ENCODE measurements at regions of chr1 and their contacts with region 1.

Region 1: GRCh38 chr1:215526553-215527151 is 40.5 kb upstream of the KCTD3 start:
- DNase-seq: no peak
- ATAC-seq: no peak

Region 2: DNA sequence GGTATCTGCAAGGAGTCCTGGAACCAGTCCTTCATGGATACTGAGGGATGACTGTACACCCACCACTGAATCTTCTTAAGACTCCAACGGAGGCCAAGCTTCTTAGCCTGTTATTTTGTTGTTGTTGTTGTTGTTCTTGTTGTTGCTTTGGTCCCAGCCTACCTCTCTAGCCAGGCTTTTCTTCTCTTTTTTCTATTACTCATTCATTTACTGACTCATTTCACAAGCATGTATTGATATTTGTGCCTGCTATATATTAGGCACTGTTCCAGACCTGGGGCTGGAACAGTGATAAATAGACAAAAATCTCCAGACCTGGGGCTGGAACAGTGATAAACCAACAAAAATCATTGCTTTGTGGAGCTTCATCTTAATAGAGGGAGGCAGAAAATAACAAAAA is 903.2 kb before region 1 on chr1:
- intact Hi-C with region 1: loop called in 1 of 2 experiments (anchors 10 kb)
- DNase-seq: no peak
- ATAC-seq: no peak

Region 3: GRCh38 chr1:214658786-214659185 is 867.9 kb before region 1 on chr1:
- intact Hi-C with region 1: loop called (anchors 2 to 5 kb)
- DNase-seq: no peak
- ATAC-seq: no peak

Region 4: DNA sequence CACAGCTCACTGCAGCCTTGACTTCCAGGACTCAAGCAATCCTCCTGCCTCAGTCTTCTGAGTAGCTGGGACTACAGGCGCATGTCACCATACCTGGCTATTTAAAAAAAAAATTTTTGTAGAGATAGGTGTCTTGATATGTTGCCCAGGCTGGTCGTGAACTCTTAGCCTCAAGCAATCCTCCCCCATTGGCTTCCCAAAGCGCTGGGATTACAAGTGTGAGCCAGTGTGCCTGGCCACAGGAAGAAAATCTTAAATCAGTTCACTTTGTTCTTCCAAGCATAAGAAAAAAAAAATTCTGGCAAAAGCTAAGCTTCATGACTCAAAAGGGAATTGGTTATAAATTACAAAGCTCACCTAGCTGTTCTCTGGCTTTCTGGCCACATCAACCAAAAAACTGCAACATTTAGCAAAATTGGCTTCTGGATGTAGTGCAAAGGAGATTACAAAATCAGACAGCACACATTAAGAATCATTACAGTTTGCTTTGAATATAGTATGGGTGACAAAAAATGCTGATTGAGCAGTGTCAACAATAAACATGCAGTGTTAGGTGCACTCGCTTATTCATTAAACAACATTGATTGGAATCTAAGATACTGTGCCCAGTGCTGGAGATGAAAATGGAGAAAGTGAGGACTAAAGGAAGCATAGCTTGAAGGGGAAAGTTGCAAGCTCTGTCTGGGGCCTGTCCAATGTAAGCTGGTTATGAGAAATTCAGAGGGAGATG is 117.1 kb after region 1 on chr1:
- intact Hi-C with region 1: no loop called
- DNase-seq: no peak
- ATAC-seq: no peak